HEK293 (cell line): ENCODE measurements at regions of chr12 and their contacts with region 1.

Region 1: DNA sequence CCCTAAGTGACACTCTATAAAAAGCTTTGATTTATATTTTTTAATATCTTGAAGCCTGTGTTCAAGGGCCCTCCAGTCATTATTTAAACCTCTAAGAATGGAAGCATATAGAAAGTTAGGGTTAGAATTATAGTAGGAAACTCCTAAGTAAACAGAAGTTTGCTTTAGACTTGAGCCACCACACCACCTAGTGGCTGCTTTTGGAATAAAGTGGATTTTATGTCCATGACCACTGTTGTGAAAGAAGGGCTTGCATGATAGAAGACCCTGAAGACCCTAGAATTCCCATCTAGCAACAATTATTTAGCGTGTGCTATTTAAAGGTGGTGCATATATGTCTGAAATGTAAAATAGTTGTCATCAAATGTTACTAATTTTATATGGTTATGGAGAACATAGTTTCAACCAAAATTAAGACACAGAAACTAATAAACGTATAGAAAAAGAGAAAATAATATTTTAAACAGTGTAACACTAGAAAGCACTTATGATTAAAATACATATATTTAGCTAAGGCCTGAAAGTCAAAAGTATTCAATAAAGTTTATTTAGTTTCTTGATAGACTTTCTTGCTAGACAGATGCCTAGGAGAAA is 21.3 kb downstream of the LRRIQ1 start:
- H3K4me3 ChIP-seq: no peak overlapping the region
- H3K27ac ChIP-seq: no peak overlapping the region
- H3K4me1 ChIP-seq: no peaks in the 10 kb centered on the region
- CTCF ChIP-seq: no peak

Region 2: GRCh38 chr12:84874125-84874824 is 183.2 kb before region 1 on chr12:
- CTCF ChIA-PET with region 1: interaction called, 26 read pairs
- POLR2A ChIA-PET with region 1: no interaction called
- H3K4me3 ChIP-seq: no peak overlapping the region
- H3K27ac ChIP-seq: no peak overlapping the region
- H3K4me1 ChIP-seq: no peaks in the 10 kb centered on the region
- CTCF ChIP-seq: peak; percentile 43; the same call in 1 of the 2 replicates

Region 3: DNA sequence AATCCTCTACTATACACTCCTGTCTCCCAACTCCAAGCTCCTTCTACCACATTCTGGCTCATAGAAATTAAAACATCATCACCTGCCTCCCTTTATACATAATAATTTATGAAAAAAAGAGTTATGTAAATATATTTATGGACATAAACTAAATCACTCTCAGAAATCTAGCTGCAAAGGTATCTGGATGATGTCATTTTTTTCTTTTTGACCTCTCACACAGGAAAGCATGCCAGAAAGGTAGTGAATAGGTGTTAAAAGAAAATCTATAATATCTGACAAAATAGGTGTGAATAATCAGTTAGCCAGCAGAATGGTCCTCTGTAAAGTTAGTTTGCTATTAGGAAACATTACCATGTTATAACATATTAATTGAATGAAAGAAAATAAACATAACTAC is 13.6 kb before region 1 on chr12:
- CTCF ChIA-PET with region 1: interaction called, 23 read pairs
- POLR2A ChIA-PET with region 1: no interaction called
- H3K4me3 ChIP-seq: no peak overlapping the region
- H3K27ac ChIP-seq: no peak overlapping the region
- H3K4me1 ChIP-seq: no peaks in the 10 kb centered on the region
- CTCF ChIP-seq: no peak